Activated B cell treated with CpG ODN at 0.5 μM for 24 hours (primary cell): ENCODE measurements at regions of chr5 and their contacts with region 1.

Region 1: GRCh38 chr5:41856644-41857491 is 13.4 kb downstream of the OXCT1 start:
- DNase-seq: peak; percentile 14
- ATAC-seq: peak; percentile 78
- H3K4me3 Mint-ChIP-seq: no peak overlapping the region
- H3K27ac Mint-ChIP-seq: no peak overlapping the region
- H3K4me1 Mint-ChIP-seq: no peaks in the 10 kb centered on the region
- H3K27me3 Mint-ChIP-seq: no peaks in the 10 kb centered on the region
- CTCF ChIP-seq: no peak

Region 2: GRCh38 chr5:41625546-41625945 is 231.3 kb before region 1 on chr5:
- CTCF ChIA-PET with region 1: no interaction called
- POLR2A ChIA-PET with region 1: no interaction called
- intact Hi-C with region 1: no loop called
- DNase-seq: no peak
- ATAC-seq: no peak
- H3K4me3 Mint-ChIP-seq: no peak overlapping the region
- H3K27ac Mint-ChIP-seq: no peak overlapping the region
- H3K4me1 Mint-ChIP-seq: no peaks in the 10 kb centered on the region
- H3K27me3 Mint-ChIP-seq: no peaks in the 10 kb centered on the region
- CTCF ChIP-seq: no peak

Region 3: DNA sequence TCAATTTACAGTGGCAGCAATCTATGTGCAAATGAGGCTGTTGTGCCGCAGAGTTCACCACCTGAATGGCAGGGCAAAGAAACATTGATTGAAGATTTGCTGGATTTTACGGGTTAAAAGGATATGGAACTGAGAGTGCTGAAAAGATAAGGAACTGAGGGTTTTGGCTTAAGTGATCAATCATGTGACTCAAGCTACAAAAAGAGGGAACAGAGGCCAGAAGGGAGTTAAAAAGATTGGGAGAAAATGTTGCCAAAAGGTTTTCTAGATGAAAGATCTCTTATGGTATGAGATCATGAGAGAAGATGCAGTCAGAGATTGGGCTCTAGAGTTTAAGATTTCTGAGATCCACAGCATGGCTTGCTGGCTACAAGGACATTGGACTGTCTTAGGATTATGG is 39.4 kb after region 1 on chr5:
- CTCF ChIA-PET with region 1: no interaction called
- POLR2A ChIA-PET with region 1: no interaction called
- intact Hi-C with region 1: no loop called
- DNase-seq: no peak
- ATAC-seq: no peak
- H3K4me3 Mint-ChIP-seq: no peak overlapping the region
- H3K27ac Mint-ChIP-seq: no peak overlapping the region
- H3K4me1 Mint-ChIP-seq: no peaks in the 10 kb centered on the region
- H3K27me3 Mint-ChIP-seq: peaks cover 32% of the 10 kb centered on the region
- CTCF ChIP-seq: no peak

Region 4: DNA sequence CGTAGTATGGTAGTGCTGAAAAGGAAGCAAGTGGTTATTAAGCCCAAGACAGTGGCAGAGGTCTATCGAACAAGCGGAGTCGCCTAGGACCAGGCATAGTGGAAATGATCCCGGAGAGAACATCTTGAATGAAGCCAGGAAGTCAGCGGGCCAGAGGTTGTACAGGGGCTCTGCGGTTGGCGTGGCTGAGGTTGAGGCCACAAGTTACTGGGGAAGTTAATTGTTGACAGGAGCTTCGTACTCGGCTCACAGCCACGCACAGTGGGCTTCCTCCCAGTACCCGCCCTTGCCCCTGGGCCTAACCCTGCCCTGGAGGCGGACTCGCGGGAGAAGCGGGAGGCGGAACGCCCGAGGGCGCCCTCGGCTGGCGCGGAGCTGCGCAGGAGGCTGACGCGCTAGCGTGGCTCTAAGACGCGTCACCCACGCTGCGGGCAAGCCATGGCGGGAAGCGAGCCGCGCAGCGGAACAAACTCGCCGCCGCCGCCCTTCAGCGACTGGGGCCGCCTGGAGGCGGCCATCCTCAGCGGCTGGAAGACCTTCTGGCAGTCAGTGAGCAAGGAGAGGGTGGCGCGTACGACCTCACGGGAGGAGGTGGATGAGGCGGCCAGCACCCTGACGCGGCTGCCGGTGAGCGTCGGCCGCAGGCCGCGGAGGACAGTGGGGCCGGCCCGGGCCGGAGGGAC is 68.1 kb after region 1 on chr5 and contains the start of gene FBXO4:
- CTCF ChIA-PET with region 1: interaction called, 7 read pairs
- POLR2A ChIA-PET with region 1: interaction called, 3 read pairs
- intact Hi-C with region 1: loop called (anchors 1 kb)
- DNase-seq: peak; percentile 82
- ATAC-seq: peak; percentile 95
- H3K4me3 Mint-ChIP-seq: peak within 1 kb of the TSS; percentile 93
- H3K27ac Mint-ChIP-seq: peak within 1 kb of the TSS; percentile 97
- H3K4me1 Mint-ChIP-seq: peaks cover 24% of the 10 kb centered on the region
- H3K27me3 Mint-ChIP-seq: no peaks in the 10 kb centered on the region
- CTCF ChIP-seq: no peak
- total RNA-seq, gene FBXO4: 14.8 and 15.9 TPM in 2 replicates

Region 5: DNA sequence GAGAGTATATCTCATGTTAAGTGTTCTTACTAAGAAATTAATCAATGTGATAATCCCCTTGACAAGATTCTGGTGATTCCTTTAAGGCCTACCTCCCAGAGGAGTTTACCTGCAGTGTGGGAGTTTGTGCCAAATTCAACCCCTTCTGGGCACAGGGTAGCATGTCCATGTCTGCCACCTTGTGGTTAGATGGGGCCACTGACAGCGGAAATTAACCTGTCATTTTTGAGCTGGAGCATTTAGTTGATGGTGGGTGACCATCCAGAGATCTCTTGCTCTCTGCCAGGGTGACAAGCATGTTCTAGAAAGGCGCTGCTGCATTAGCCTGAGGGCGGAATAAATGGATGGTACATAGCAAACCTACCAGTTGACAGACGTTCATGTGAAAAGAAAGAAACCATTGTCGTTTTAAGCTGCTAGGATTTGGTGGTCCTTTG is 200.4 kb after region 1 on chr5:
- CTCF ChIA-PET with region 1: interaction called, 302 read pairs
- POLR2A ChIA-PET with region 1: no interaction called
- intact Hi-C with region 1: loop called (anchors 1 kb)
- DNase-seq: no peak
- ATAC-seq: peak; percentile 89
- H3K4me3 Mint-ChIP-seq: no peak overlapping the region
- H3K27ac Mint-ChIP-seq: no peak overlapping the region
- H3K4me1 Mint-ChIP-seq: peaks cover 2% of the 10 kb centered on the region
- H3K27me3 Mint-ChIP-seq: peaks cover 12% of the 10 kb centered on the region
- CTCF ChIP-seq: peak; percentile 62

Region 6: DNA sequence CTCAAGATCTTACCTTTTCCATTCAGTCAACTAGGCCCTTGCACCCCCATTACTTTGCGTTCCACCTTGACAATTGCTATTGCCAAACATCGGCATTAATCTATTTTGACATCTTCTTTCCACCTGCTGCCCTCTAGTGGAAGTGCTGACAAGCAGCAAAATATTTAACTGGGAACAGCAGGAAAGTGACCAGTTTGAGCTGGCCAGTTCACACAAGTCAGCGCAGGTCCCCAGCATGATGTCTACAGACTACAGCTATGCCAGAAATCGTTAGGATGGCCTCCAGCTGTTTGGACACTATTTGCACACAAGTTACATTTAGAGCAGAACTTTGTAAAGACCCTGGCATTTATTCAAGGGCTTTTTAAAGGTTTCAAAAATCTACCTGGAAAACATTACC is 726.5 kb after region 1 on chr5:
- CTCF ChIA-PET with region 1: interaction called, 9 read pairs
- POLR2A ChIA-PET with region 1: no interaction called
- intact Hi-C with region 1: loop called (anchors 1 kb)
- DNase-seq: no peak
- ATAC-seq: no peak
- H3K4me3 Mint-ChIP-seq: no peak overlapping the region
- H3K27ac Mint-ChIP-seq: no peak overlapping the region
- H3K4me1 Mint-ChIP-seq: peaks cover 3% of the 10 kb centered on the region
- H3K27me3 Mint-ChIP-seq: peaks cover 8% of the 10 kb centered on the region
- CTCF ChIP-seq: no peak

Region 7: DNA sequence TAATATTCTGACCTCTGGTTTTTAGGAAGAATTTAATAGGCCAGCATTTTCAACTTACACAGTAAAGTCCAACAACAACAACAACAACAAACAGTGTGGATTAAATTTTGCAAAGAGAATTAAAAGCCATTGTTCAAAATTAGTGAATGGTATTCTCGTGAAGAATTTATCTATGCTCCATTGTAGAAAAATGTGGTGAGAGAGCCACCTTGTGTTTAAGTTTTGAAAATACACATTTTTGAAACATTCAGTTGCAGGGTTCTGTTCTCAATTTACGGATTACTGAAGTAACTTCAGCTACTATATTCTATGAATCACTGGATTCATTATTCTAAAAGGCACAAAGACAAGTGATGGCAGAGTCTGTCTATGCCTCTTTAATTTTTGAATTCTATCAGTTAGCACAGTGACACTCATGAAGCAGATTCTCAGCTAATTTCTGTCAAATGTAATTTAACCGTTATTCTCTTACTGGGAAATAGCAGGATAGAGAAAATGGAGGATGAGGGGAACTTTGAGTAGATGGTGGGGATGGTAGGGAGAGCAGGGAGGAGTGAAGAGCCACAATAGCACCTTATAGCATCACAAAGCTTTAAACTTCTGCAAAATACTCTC is 910.7 kb after region 1 on chr5:
- CTCF ChIA-PET with region 1: interaction called, 5 read pairs
- POLR2A ChIA-PET with region 1: no interaction called
- intact Hi-C with region 1: loop called (anchors 1 kb)
- DNase-seq: no peak
- ATAC-seq: no peak
- H3K4me3 Mint-ChIP-seq: no peak overlapping the region
- H3K27ac Mint-ChIP-seq: no peak overlapping the region
- H3K4me1 Mint-ChIP-seq: no peaks in the 10 kb centered on the region
- H3K27me3 Mint-ChIP-seq: peaks cover 6% of the 10 kb centered on the region
- CTCF ChIP-seq: no peak